ENCODE measurements at regions of chr9 and their contacts with region 1.

Region 1: GRCh38 chr9:36560857-36561221 is 11.9 kb upstream of the MELK start:
- DNase-seq: no peak
- ATAC-seq: no peak
- H3K4me3 ChIP-seq: no peak overlapping the region
- H3K4me3 Mint-ChIP-seq: no peak overlapping the region
- H3K27ac ChIP-seq: no peak overlapping the region
- H3K27ac Mint-ChIP-seq: no peak overlapping the region
- H3K4me1 ChIP-seq: no peaks in the 10 kb centered on the region
- H3K4me1 Mint-ChIP-seq: peaks cover 2% of the 10 kb centered on the region
- H3K27me3 ChIP-seq: no peaks in the 10 kb centered on the region
- H3K27me3 Mint-ChIP-seq: no peaks in the 10 kb centered on the region
- CTCF ChIP-seq: no peak

Region 2: GRCh38 chr9:36450110-36450732 is 110.6 kb before region 1 on chr9:
- CTCF ChIA-PET with region 1: interaction called, 3 read pairs
- POLR2A ChIA-PET with region 1: no interaction called
- intact Hi-C with region 1: loop called (anchors 1 kb)
- DNase-seq: peak in 7 of 14 experiments; percentile 4 to 66 (median 52)
- ATAC-seq: no peak
- H3K4me3 ChIP-seq: no peak overlapping the region
- H3K4me3 Mint-ChIP-seq: no peak overlapping the region
- H3K27ac ChIP-seq: no peak overlapping the region
- H3K27ac Mint-ChIP-seq: no peak overlapping the region
- H3K4me1 ChIP-seq: peaks cover 13% of the 10 kb centered on the region
- H3K4me1 Mint-ChIP-seq: peaks cover 35% of the 10 kb centered on the region
- H3K27me3 ChIP-seq: no peaks in the 10 kb centered on the region
- H3K27me3 Mint-ChIP-seq: no peaks in the 10 kb centered on the region
- CTCF ChIP-seq: peak; percentile 80